Cardiac septum (tissue), 1 donor: ENCODE measurements at regions of chr17 and their contacts with region 1.

Region 1: DNA sequence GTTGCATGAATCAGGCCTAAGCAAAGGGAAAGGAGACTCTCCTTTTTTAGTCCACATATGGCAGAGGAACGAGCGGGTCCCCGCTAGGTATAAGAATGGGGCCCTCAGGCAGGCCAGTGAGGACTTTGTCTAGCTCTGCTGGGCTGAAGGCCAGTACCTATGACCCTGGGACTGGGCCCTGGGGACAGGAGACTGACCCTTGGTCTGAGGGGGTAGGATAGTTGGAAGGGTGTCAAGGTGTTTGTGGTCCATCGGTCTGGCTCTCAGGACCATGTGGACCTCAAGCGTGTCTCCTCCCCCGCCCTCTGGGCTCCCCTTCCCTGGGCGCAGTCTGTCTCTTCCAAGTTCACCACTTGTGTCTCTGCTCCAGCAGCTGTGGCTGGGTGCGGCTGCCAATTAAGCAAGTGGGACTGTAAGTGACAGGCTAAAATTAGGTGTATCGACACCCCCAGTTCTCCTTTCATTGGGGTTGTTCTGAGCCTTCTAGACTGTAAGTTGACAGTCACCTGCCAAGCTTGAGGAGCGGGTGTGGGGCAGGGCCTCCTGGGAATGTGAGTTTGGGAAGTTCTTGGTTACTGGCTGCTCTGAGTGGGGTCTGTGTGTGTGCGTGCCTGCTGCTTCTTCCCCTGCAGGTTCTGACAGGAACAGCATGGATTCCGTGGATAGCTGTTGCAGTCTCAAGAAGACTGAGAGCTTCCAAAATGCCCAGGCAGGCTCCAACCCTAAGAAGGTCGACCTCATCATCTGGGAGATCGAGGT is 24.5 kb downstream of the AKAP1 start:
- DNase-seq: no peak

Region 2: DNA sequence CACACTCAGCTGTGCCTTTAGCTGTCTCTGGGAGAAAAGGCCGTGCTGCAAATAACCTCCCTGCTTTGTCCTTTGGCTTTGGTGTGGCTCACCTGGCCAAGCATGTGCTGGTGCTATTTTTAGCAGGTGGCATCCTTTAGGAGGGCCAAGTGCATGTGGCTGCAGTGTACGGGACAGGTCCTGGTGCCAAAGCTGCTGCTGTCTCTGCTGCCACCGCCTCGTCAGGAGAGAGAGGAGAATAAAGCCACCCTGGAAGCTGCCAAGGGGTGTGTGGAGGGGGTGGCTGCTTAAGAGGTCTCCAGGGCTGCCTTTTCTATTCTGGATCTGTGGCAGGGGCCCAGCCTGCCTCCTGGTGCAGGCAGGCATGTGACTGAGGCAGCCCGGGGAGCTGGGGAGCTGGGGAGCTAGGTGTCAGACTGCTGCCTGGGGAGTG is 18.4 kb before region 1 on chr17:
- intact Hi-C with region 1: loop called (anchors 2 kb)
- DNase-seq: peak; percentile 92

Region 3: DNA sequence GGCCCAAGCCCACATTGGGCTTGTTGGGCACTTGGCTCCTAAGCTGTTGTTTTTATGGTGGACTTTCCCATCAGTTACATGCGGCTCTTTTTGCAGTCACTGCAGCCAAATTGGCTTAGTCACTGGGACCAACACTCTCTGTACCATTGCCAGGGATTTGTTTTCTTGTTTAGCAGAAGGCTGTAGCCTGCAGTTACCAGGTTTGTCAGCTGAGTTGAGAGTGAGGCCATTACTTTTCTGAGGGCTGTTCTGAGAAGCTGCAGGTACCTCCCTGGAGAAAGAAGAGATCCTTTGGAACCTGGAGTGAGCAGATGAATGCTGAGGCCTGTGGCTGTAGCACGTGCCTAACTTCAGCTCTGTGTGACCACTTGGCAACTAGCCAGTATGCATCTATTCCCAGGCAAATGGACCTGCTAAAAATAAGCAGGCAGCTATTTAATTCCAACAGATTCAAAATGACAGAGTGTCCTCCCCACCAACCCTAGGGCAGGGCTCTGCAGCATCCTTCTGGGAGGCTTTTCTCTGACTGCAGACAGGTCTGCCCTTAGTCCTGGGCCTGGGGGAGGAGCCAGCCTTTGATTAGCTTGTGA is 11.6 kb before region 1 on chr17:
- intact Hi-C with region 1: loop called (anchors 1 kb)
- DNase-seq: no peak

Region 4: GRCh38 chr17:57226793-57227192 is 117.2 kb after region 1 on chr17:
- intact Hi-C with region 1: no loop called
- DNase-seq: no peak